ENCODE measurements at regions of chr19 and their contacts with region 1.

Region 1: GRCh38 chr19:15101479-15102082 is 5.6 kb upstream of the SYDE1 start:
- DNase-seq: no peak
- H3K4me3 ChIP-seq: no peak overlapping the region
- CTCF ChIP-seq: peak; percentile 67

Region 2: GRCh38 chr19:14985133-14985532 is 116.4 kb before region 1 on chr19:
- CTCF ChIA-PET with region 1: no interaction called
- POLR2A ChIA-PET with region 1: no interaction called
- DNase-seq: no peak
- H3K4me3 ChIP-seq: no peak overlapping the region
- CTCF ChIP-seq: no peak

Region 3: DNA sequence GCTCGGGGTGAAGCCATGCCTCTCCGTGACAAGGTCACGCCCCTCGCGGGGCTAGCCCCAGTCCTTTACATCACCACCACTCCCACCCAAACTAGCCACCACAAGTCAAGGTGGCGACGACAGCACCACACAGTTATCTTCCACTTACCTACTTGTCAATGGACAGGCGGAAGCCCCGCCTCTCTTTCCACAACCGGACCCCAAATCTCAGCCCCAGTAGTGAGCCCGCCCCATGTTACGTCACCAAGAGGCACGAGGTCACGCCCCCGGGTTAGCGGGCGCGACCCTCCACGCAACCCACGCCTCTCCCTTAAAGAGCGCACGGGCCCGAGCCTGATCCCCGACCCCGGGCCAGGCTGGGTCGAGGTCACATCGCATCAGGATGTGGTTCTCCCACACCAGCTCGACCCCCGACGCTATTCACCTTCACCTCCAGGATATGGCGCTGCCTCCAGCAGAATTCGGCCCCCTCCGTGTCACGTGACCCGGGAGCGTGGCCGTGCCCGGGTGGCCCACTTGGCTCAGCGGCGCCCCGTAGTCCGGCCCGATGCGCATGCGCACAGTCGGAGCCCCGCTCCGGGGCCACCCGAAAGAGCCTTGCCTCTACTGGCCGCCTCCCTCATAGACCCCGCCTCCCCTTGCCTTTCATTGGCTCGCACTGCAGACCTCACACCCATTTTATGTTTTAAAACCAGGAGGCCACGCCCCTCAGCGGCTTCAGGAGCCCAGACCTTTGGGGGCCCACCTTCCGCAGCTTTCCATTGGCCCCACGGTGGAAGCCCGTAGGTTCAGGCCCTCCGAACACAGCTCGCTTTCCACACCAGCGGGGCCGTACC is 23.9 kb after region 1 on chr19:
- CTCF ChIA-PET with region 1: interaction called, 11 read pairs
- POLR2A ChIA-PET with region 1: no interaction called
- DNase-seq: peak; percentile 80
- H3K4me3 ChIP-seq: peak overlapping the region; percentile 92
- CTCF ChIP-seq: peak; percentile 3

Region 4: GRCh38 chr19:15144036-15144646 is 42.6 kb after region 1 on chr19:
- CTCF ChIA-PET with region 1: interaction called, 49 read pairs
- POLR2A ChIA-PET with region 1: no interaction called
- DNase-seq: no peak
- H3K4me3 ChIP-seq: no peak overlapping the region
- CTCF ChIP-seq: no peak

Region 5: DNA sequence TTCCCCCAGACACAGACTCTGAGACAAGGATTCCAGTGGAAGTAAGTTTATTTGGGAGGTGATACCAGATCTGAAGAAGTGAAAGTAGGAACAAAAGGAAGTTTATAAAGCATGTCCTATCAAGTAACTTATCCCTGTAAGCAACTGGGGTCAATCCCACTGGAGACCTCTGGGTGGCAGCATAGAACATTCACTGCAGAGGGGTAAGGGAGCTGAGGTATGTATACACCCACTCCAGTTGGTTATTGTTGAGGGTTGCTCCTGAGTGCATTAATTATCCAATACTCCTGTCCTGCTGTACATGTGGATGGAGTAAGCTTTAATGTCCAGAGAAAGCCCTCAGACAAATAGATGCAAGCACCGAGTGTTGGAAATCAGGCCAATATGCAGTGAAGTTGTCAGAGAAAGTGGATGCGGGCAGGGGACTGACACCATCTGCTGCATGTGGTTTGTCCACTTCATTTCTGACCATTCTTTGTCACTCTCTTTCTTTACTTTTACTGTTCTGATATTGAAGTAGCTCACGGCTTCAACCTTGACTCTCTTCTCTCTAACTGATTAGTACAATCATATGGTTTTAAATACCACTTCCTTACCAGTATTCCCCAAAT is 52.5 kb after region 1 on chr19:
- CTCF ChIA-PET with region 1: interaction called, 49 read pairs
- POLR2A ChIA-PET with region 1: no interaction called
- DNase-seq: no peak
- H3K4me3 ChIP-seq: no peak overlapping the region
- CTCF ChIP-seq: peak; percentile 57

Region 6: GRCh38 chr19:15555759-15556633 is 454.4 kb after region 1 on chr19:
- CTCF ChIA-PET with region 1: interaction called, 20 read pairs
- POLR2A ChIA-PET with region 1: no interaction called
- DNase-seq: peak; percentile 59
- H3K4me3 ChIP-seq: peak overlapping the region; percentile 43
- CTCF ChIP-seq: peak; percentile 91